Activated CD8-positive, alpha-beta memory T cell treated with anti-CD3 and anti-CD28 coated beads, Interleukin-2, amount 10 ng/mL, durations not matched to agents 7 days and 5 days (primary cell): ENCODE measurements at regions of chr2 and their contacts with region 1.

Region 1: DNA sequence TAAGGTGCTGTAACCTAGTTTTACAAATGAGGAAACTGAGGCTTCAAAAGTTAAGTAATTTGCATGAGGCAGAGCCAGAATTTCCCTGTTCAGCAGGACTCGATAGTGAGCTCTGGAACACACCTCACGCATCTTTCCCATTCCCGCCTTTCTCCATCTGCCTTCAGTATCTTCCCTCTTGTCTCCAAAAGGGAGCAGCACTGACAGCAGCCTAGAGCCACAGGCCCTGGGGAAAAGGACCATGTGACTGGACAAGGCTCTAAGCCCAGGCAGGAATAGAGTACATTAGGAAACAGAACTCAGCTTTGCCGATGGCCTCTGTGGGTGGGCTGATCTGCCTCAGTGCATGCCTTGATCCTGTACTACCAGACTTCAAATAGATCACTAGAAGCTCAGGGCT is 21.5 kb downstream of the GPR155 start:
- DNase-seq: no peak
- ATAC-seq: no peak
- H3K4me3 Mint-ChIP-seq: no peak overlapping the region
- H3K27ac Mint-ChIP-seq: no peak overlapping the region
- H3K4me1 Mint-ChIP-seq: no peaks in the 10 kb centered on the region
- H3K27me3 Mint-ChIP-seq: no peaks in the 10 kb centered on the region

Region 2: GRCh38 chr2:174487108-174487819 is 21.9 kb after region 1 on chr2:
- CTCF ChIA-PET with region 1: interaction called, 56 read pairs
- DNase-seq: peak; percentile 100
- ATAC-seq: peak; percentile 92
- H3K4me3 Mint-ChIP-seq: peak overlapping the region; percentile 95
- H3K27ac Mint-ChIP-seq: peak overlapping the region; percentile 79
- H3K4me1 Mint-ChIP-seq: peaks cover 59% of the 10 kb centered on the region
- H3K27me3 Mint-ChIP-seq: no peaks in the 10 kb centered on the region

Region 3: GRCh38 chr2:174522553-174522952 is 57.2 kb after region 1 on chr2:
- CTCF ChIA-PET with region 1: interaction called, 74 read pairs
- DNase-seq: no peak
- ATAC-seq: no peak
- H3K4me3 Mint-ChIP-seq: no peak overlapping the region
- H3K27ac Mint-ChIP-seq: no peak overlapping the region
- H3K4me1 Mint-ChIP-seq: peaks cover 16% of the 10 kb centered on the region
- H3K27me3 Mint-ChIP-seq: no peaks in the 10 kb centered on the region

Region 4: GRCh38 chr2:174553811-174554493 is 88.6 kb after region 1 on chr2:
- CTCF ChIA-PET with region 1: interaction called, 99 read pairs
- DNase-seq: peak; percentile 72
- ATAC-seq: peak; percentile 80
- H3K4me3 Mint-ChIP-seq: peak overlapping the region; percentile 45
- H3K27ac Mint-ChIP-seq: peak overlapping the region; percentile 82
- H3K4me1 Mint-ChIP-seq: peaks cover 39% of the 10 kb centered on the region
- H3K27me3 Mint-ChIP-seq: no peaks in the 10 kb centered on the region

Region 5: DNA sequence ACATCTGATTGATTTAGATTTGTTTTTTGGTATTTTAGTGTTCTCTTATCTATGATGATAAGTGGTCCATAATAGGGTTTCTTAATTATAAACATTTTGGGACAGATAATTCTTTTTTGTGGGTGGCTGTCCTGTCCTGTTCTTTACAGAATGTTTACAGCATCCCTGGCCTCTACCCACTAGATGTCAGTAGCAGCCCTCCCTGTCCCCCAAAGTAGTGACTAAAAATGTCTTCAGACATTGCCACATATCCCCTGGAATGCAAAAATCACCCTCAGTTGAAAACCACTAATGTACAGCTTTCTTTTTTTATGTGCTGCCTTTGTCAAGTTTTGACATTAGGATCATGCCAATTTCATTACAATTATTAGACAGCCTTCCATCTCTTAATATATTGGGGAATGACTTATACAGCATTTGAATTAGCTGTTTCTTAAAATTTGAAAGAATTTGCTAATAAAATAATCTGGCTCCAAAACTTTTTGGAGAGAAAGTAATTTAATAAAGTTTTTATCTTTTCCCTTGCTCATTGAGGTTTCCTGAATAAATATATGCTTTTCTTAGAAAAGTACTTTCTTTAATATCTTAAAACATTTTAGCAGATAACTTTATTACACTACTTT is 112.8 kb after region 1 on chr2:
- CTCF ChIA-PET with region 1: interaction called, 15 read pairs
- DNase-seq: peak; percentile 74
- ATAC-seq: peak; percentile 65
- H3K4me3 Mint-ChIP-seq: no peak overlapping the region
- H3K27ac Mint-ChIP-seq: peak overlapping the region; percentile 26
- H3K4me1 Mint-ChIP-seq: peaks cover 76% of the 10 kb centered on the region
- H3K27me3 Mint-ChIP-seq: no peaks in the 10 kb centered on the region